MCF 10A (cell line): ENCODE measurements at regions of chr20 and their contacts with region 1.

Region 1: DNA sequence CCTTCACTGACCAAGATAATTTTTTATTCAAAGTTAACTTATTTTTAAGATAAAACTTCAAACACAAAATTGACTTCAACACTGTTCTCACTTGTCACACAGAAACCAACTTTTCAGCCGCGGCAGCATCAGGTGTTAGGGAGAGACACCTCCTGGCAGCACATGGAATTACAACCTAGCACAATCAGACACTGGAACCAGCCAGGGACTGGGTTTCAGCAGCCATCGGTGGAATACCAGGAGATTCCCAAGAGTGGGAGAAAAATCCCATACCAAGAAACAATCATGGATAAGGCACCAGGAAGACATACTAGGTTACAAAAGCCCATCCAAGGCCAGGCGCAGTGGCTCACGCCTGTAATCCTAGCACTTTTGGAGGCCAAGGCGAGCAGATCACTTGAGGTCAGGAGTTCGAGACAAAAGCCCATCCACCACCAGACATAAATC is 70.0 kb downstream of the SNX5 start:
- DNase-seq: peak; percentile 78
- H3K4me3 Mint-ChIP-seq: no peak overlapping the region
- H3K27ac Mint-ChIP-seq: no peak overlapping the region
- H3K4me1 Mint-ChIP-seq: peaks cover 21% of the 10 kb centered on the region
- H3K27me3 Mint-ChIP-seq: no peaks in the 10 kb centered on the region
- CTCF ChIP-seq: peak; percentile 91

Region 2: GRCh38 chr20:17611540-17612286 is 286.9 kb before region 1 on chr20:
- CTCF ChIA-PET with region 1: interaction called, 11 read pairs
- POLR2A ChIA-PET with region 1: interaction called, 3 read pairs
- intact Hi-C with region 1: loop called (anchors 2 kb)
- DNase-seq: peak; percentile 68
- H3K4me3 Mint-ChIP-seq: no peak overlapping the region
- H3K27ac Mint-ChIP-seq: peak overlapping the region; percentile 93
- H3K4me1 Mint-ChIP-seq: peaks cover 7% of the 10 kb centered on the region
- H3K27me3 Mint-ChIP-seq: no peaks in the 10 kb centered on the region
- CTCF ChIP-seq: no peak

Region 3: DNA sequence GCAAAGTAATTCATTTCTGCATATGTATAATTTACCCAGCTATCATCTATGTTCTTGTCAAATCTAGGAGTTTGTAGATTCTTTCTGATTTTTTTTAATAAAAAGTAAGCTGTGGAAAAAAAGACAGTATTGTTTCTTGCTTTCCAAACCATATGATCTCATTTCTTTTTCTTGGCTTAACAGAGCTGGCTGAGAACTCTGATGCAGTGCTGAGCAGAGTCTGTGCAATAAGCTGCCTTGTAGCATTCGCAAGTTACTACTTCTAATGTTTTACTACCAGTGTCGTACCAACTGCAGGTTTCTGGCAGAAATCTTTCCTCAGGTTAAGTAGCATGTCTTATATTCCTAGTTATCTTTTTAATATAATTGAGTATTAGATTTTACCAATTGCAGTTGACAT is 232.1 kb before region 1 on chr20:
- CTCF ChIA-PET with region 1: interaction called, 25 read pairs
- POLR2A ChIA-PET with region 1: interaction called, 3 read pairs
- intact Hi-C with region 1: no loop called
- DNase-seq: no peak
- H3K4me3 Mint-ChIP-seq: no peak overlapping the region
- H3K27ac Mint-ChIP-seq: no peak overlapping the region
- H3K4me1 Mint-ChIP-seq: peaks cover 29% of the 10 kb centered on the region
- H3K27me3 Mint-ChIP-seq: no peaks in the 10 kb centered on the region
- CTCF ChIP-seq: no peak

Region 4: GRCh38 chr20:17691758-17692157 is 206.8 kb before region 1 on chr20:
- CTCF ChIA-PET with region 1: interaction called, 15 read pairs
- POLR2A ChIA-PET with region 1: no interaction called
- intact Hi-C with region 1: no loop called
- DNase-seq: no peak
- H3K4me3 Mint-ChIP-seq: no peak overlapping the region
- H3K27ac Mint-ChIP-seq: no peak overlapping the region
- H3K4me1 Mint-ChIP-seq: no peaks in the 10 kb centered on the region
- H3K27me3 Mint-ChIP-seq: peaks cover 32% of the 10 kb centered on the region
- CTCF ChIP-seq: no peak

Region 5: DNA sequence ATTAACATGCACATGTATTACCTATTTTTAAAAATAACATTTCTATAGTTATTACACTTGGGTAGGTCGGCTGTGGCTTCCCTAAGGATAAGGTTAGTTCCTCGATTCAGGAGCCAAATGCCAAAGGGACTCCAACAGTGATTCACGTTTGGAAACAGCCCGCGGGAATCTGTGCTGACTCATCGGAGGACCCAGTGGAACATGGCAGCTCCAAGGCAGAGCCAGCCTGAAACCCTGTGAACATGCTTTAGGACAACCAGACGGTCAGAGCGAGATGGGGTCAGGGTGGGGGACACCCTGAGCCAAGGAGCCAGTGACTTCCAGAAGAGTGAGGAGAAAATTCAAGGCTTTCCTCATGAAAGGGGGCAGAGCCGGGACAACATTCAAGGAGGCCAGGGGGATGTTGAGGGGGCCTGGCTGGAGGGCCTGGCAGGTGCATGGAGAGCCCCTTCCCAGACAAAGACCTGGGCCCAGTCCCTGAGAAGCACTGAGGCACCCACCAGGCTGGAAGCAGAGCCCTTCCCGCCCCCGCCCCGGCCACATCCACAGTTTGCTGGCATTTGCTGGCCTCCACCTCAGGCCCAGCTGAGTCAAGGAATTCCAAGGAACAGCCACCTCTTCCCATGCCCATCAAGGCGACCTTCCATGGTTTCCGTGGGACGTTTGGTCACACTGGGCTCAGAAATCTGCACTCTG is 63.2 kb before region 1 on chr20:
- CTCF ChIA-PET with region 1: interaction called, 8 read pairs
- POLR2A ChIA-PET with region 1: no interaction called
- intact Hi-C with region 1: loop called (anchors 10 kb)
- DNase-seq: peak; percentile 96
- H3K4me3 Mint-ChIP-seq: peak overlapping the region; percentile 5
- H3K27ac Mint-ChIP-seq: peak overlapping the region; percentile 76
- H3K4me1 Mint-ChIP-seq: peaks cover 31% of the 10 kb centered on the region
- H3K27me3 Mint-ChIP-seq: no peaks in the 10 kb centered on the region
- CTCF ChIP-seq: no peak

Region 6: GRCh38 chr20:17910828-17911294 is 12.3 kb after region 1 on chr20:
- CTCF ChIA-PET with region 1: interaction called, 16 read pairs
- POLR2A ChIA-PET with region 1: no interaction called
- intact Hi-C with region 1: no loop called
- DNase-seq: peak; percentile 66
- H3K4me3 Mint-ChIP-seq: no peak overlapping the region
- H3K27ac Mint-ChIP-seq: no peak overlapping the region
- H3K4me1 Mint-ChIP-seq: peaks cover 13% of the 10 kb centered on the region
- H3K27me3 Mint-ChIP-seq: peaks cover 24% of the 10 kb centered on the region
- CTCF ChIP-seq: no peak

Region 7: DNA sequence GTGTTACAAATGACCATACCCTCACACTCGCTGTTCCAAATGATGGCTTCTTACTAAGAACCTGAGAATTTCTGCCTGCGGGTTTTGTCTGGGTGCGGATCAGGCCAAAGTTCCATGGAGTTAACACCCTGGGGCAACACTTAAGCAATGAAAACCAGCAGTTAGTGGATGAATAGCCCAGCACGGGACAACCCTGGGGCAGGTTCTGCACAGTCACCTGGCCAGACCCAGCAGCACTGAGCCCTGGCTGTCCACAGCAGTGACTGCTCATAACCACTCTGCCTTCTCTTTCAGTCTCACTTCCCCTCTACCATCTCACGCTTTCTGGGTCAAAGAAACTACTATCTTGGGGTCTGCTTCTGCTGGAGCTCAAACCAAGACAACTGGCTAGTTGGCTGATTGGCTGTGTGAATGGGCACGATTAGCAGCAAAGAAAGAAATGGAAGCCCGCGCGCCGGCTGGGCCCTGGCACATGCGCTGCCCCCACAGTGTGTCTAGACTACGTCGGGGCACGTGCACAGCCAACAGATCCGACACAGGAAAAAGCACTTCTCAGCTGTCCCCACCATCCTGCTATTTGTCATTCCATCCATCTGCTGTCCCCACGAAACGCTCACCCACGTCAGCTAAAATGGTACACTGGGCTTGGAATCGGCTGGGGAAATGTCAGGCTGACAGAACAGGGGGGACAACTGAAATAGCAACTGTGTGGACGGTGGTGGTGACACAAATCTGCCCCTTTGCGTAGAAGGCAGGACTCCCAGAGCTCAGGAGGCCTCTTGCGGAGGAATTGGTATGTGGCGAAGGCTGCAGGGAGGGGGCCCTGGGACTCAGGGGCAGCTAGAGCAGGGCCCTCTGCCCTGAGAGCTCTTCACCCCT is 106.9 kb after region 1 on chr20:
- CTCF ChIA-PET with region 1: no interaction called
- POLR2A ChIA-PET with region 1: no interaction called
- intact Hi-C with region 1: no loop called
- DNase-seq: no peak
- H3K4me3 Mint-ChIP-seq: no peak overlapping the region
- H3K27ac Mint-ChIP-seq: no peak overlapping the region
- H3K4me1 Mint-ChIP-seq: peaks cover 13% of the 10 kb centered on the region
- H3K27me3 Mint-ChIP-seq: no peaks in the 10 kb centered on the region
- CTCF ChIP-seq: no peak

Region 8: DNA sequence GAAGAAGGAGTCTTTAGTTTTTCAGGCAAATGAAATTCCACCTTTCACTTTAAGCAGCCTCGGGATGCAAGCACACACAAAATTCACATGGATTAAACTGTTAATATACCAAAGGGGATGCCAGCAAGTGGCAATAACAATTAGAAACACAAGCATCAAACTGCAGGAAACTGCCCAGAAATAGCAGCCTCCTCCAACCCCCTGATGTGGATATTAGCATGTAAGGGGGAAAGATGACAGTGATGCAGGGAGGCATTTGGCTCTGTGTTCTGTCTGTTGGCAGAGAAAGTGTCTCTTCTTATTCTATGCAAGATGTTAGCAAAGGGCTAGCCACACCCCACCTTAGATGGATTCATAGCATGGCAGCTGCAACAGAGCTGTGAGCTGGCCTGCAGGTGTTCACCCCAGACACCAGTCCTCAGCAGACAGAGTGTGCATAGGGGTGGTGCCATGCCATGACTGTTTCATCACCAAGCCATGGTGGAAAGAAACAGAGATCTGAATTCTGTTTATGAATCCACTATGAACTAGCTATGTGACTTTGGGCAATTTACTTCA is 953.0 kb after region 1 on chr20:
- CTCF ChIA-PET with region 1: no interaction called
- POLR2A ChIA-PET with region 1: no interaction called
- intact Hi-C with region 1: no loop called
- DNase-seq: peak; percentile 8
- H3K4me3 Mint-ChIP-seq: no peak overlapping the region
- H3K27ac Mint-ChIP-seq: peak overlapping the region; percentile 69
- H3K4me1 Mint-ChIP-seq: peaks cover 29% of the 10 kb centered on the region
- H3K27me3 Mint-ChIP-seq: no peaks in the 10 kb centered on the region
- CTCF ChIP-seq: no peak